HCT116 (cell line): ENCODE measurements at regions of chr1 and their contacts with region 1.

Region 1: GRCh38 chr1:41795205-41795762 is 123.4 kb downstream of the HIVEP3 start:
- DNase-seq: peak; percentile 38
- ATAC-seq: peak; percentile 86
- H3K4me3 ChIP-seq: no peak overlapping the region
- H3K27ac ChIP-seq: no peak overlapping the region
- H3K4me1 ChIP-seq: peaks cover 0 to 8% of the 10 kb centered on the region in 2 experiments; a peak in 2 of 4 replicates
- H3K27me3 ChIP-seq: no peaks in the 10 kb centered on the region
- CTCF ChIP-seq: peak; percentile 30 to 87 (median 47)
- POLR2A ChIP-seq: no peak
- RAD21 ChIP-seq: peak; percentile 84

Region 2: DNA sequence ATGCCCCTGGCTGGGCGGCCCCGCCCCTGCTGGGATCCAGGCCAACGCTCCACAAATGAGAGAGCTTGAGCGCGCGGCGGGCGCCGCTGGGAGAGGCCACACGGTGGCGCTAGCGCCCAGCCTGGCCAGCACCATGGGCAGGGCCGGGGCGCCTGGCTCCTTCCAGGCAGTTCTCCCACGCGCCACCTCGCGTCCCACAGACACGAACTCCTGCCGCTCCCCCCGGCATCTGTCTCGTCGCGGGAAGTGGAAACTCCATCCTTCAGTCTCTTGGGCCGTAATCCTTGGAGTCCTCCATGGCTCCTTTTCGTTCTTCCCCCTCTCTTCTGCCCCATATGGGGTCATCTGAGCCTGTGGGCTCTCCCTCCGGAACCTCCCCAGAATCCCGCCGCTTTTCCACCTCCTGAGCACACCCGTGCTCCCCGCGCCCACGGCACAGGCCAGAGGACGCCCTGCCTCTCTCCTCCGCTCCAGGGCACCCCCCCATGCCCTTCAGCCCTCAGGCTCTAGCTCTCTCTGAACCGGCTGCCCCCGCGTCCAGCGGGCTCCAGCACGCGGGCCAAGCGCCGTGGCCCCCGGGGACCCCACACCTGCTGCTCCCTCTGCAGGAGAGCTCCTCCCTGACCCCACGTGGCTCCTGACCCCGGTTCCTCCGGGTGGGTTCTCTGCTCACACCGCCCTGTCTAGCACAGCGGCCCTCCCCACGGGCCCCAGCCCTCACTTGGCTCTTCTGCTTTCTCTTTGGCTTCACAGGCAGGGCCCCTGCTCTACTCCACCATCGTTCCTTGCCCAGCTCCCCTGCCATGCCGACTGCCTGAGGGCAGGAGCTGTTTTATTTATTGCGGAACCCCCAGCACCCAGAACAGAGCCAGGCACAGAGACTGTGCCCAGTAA is 278.9 kb before region 1 on chr1:
- CTCF ChIA-PET with region 1: no interaction called
- POLR2A ChIA-PET with region 1: no interaction called
- RAD21 ChIA-PET with region 1: no interaction called
- intact Hi-C with region 1: loop called (anchors 1 kb)
- DNase-seq: peak; percentile 67
- ATAC-seq: peak; percentile 97
- H3K4me3 ChIP-seq: no peak overlapping the region
- H3K27ac ChIP-seq: no peak overlapping the region
- H3K4me1 ChIP-seq: peaks cover 27 to 34% of the 10 kb centered on the region in 2 experiments
- H3K27me3 ChIP-seq: no peaks in the 10 kb centered on the region
- CTCF ChIP-seq: peak; percentile 80 to 94 (median 90)
- POLR2A ChIP-seq: no peak
- RAD21 ChIP-seq: peak; percentile 88

Region 3: GRCh38 chr1:42552636-42553035 is 757.4 kb after region 1 on chr1:
- CTCF ChIA-PET with region 1: no interaction called
- POLR2A ChIA-PET with region 1: no interaction called
- RAD21 ChIA-PET with region 1: no interaction called
- intact Hi-C with region 1: no loop called
- DNase-seq: no peak
- ATAC-seq: no peak
- H3K4me3 ChIP-seq: no peak overlapping the region
- H3K27ac ChIP-seq: no peak overlapping the region
- H3K4me1 ChIP-seq: no peaks in the 10 kb centered on the region
- H3K27me3 ChIP-seq: no peaks in the 10 kb centered on the region
- CTCF ChIP-seq: no peak
- POLR2A ChIP-seq: no peak
- RAD21 ChIP-seq: no peak